K562 (cell line): ENCODE measurements at regions of chr1 and their contacts with region 1.

Region 1: GRCh38 chr1:92831762-92832536 is at the start of gene RPL5:
- DNase-seq: peak; percentile 96 to 99 (median 97)
- ATAC-seq: peak; percentile 90
- H3K4me3 ChIP-seq: peak within 1 kb of the TSS; percentile 91
- H3K27ac ChIP-seq: peak within 1 kb of the TSS; percentile 89
- H3K4me1 ChIP-seq: peaks cover 6 to 18% of the 10 kb centered on the region in 2 experiments; a peak in 3 of 5 replicates
- H3K27me3 ChIP-seq: no peaks in the 10 kb centered on the region
- CTCF ChIP-seq: peak; percentile 93 to 98 (median 97)
- EP300 ChIP-seq: peak; percentile 48; the same call in 1 of the 2 replicates
- POLR2A ChIP-seq: peak; percentile 100
- RAD21 ChIP-seq: peak; percentile 39; a peak in 3 of 4 replicates
- polyA plus RNA-seq, gene RPL5: 4,024 to 4,252 TPM

Region 2: GRCh38 chr1:92713939-92714338 is 118.0 kb before region 1 on chr1:
- CTCF ChIA-PET with region 1: no interaction called
- POLR2A ChIA-PET with region 1: no interaction called
- in situ Hi-C with region 1: no loop called
- intact Hi-C with region 1: no loop called
- DNase-seq: no peak
- ATAC-seq: no peak
- H3K4me3 ChIP-seq: no peak overlapping the region
- H3K27ac ChIP-seq: no peak overlapping the region
- H3K4me1 ChIP-seq: peaks cover 6 to 23% of the 10 kb centered on the region in 2 experiments; a peak in 3 of 5 replicates
- H3K27me3 ChIP-seq: no peaks in the 10 kb centered on the region
- CTCF ChIP-seq: no peak
- EP300 ChIP-seq: no peak
- POLR2A ChIP-seq: no peak
- RAD21 ChIP-seq: no peak

Region 3: DNA sequence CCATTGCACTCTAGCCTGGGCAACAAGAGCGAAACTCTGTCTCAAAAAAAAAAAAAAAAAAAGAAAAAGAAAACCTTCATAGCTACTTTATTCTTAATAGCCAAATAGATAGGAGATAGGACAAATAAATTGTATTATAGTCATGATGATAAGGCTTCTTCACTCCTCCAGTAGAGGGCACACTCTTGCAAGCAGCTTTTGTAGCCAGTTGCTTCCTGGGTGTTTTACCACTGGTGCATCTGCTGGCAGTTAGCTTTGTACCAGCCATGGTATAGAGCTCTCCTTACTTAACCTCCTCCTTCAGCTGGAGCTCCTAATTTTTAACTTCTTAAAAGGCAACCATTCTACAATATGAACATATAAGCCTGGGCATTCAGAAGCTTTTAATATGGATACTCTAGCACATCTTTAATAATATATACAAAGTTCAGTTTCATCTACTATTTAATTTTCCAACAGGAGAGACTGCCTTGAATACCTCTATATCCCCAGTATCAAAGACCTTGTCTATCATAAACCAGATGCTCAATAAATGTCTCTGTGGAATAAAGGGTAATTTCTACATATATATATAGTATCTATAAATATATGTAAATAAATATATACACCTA is 82.8 kb before region 1 on chr1:
- CTCF ChIA-PET with region 1: interaction called, 5 read pairs
- POLR2A ChIA-PET with region 1: interaction called, 5 read pairs
- in situ Hi-C with region 1: loop called (anchors 5 kb)
- intact Hi-C with region 1: loop called (anchors 5 kb)
- DNase-seq: peak; percentile 40 to 76 (median 52)
- ATAC-seq: peak; percentile 89
- H3K4me3 ChIP-seq: no peak overlapping the region
- H3K27ac ChIP-seq: no peak overlapping the region
- H3K4me1 ChIP-seq: peaks cover 0 to 6% of the 10 kb centered on the region in 2 experiments; a peak in 3 of 5 replicates
- H3K27me3 ChIP-seq: no peaks in the 10 kb centered on the region
- CTCF ChIP-seq: peak; percentile 73 to 87 (median 77)
- EP300 ChIP-seq: no peak
- POLR2A ChIP-seq: no peak
- RAD21 ChIP-seq: peak; percentile 49 to 72

Region 4: DNA sequence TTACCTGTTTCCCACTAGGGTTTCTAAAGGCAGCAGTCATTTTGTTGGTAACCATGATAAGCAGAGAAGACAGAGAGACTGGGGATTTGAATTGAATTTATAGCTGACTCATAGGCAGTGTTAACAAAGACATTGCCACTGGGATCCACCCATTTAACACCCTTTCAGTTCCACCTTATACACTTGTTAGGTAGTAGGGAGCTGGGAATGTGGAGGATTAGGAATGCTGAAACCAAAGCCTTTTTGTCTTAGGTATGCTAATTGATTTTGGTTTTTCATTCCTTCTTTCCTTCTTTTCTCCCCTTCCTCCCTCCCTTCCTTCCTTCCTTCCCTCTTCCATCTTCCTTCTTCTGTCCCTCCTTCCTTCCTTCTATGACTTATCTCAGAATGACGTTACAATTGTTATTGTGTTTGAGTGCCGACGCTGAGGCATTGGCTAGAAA is 39.6 kb before region 1 on chr1:
- CTCF ChIA-PET with region 1: no interaction called
- POLR2A ChIA-PET with region 1: interaction called, 12 read pairs
- in situ Hi-C with region 1: no loop called
- intact Hi-C with region 1: loop called (anchors 5 kb)
- DNase-seq: peak; percentile 21 to 72 (median 44)
- ATAC-seq: peak; percentile 88
- H3K4me3 ChIP-seq: no peak overlapping the region
- H3K27ac ChIP-seq: peak overlapping the region; percentile 71
- H3K4me1 ChIP-seq: peaks cover 8 to 17% of the 10 kb centered on the region in 2 experiments; a peak in 3 of 5 replicates
- H3K27me3 ChIP-seq: no peaks in the 10 kb centered on the region
- CTCF ChIP-seq: no peak
- EP300 ChIP-seq: no peak
- POLR2A ChIP-seq: 0 out of 2 replicates have a peak, but pooled peaks have one; percentile 42
- RAD21 ChIP-seq: no peak

Region 5: GRCh38 chr1:92817986-92818764 is 13.8 kb before region 1 on chr1:
- CTCF ChIA-PET with region 1: interaction called, 3 read pairs
- POLR2A ChIA-PET with region 1: interaction called, 20 read pairs
- in situ Hi-C with region 1: no loop called
- intact Hi-C with region 1: no loop called
- DNase-seq: peak; percentile 42 to 57 (median 53)
- ATAC-seq: peak; percentile 81
- H3K4me3 ChIP-seq: no peak overlapping the region
- H3K27ac ChIP-seq: no peak overlapping the region
- H3K4me1 ChIP-seq: no peaks in the 10 kb centered on the region
- H3K27me3 ChIP-seq: no peaks in the 10 kb centered on the region
- CTCF ChIP-seq: peak; percentile 70 to 80 (median 71)
- EP300 ChIP-seq: no peak
- POLR2A ChIP-seq: no peak
- RAD21 ChIP-seq: peak; percentile 61 to 83

Region 6: GRCh38 chr1:92851729-92852128 is 19.8 kb after region 1 on chr1:
- CTCF ChIA-PET with region 1: interaction called, 3 read pairs
- POLR2A ChIA-PET with region 1: interaction called, 16 read pairs
- in situ Hi-C with region 1: no loop called
- intact Hi-C with region 1: no loop called
- DNase-seq: peak in 1 of 4 experiments; percentile 38
- ATAC-seq: peak; percentile 50
- H3K4me3 ChIP-seq: peak overlapping the region; percentile 7
- H3K27ac ChIP-seq: no peak overlapping the region
- H3K4me1 ChIP-seq: peaks cover 14 to 19% of the 10 kb centered on the region in 2 experiments; a peak in 4 of 5 replicates
- H3K27me3 ChIP-seq: no peaks in the 10 kb centered on the region
- CTCF ChIP-seq: no peak
- EP300 ChIP-seq: no peak
- POLR2A ChIP-seq: no peak
- RAD21 ChIP-seq: no peak